MCF 10A (cell line): ENCODE measurements at regions of chr16 and their contacts with region 1.

Region 1: DNA sequence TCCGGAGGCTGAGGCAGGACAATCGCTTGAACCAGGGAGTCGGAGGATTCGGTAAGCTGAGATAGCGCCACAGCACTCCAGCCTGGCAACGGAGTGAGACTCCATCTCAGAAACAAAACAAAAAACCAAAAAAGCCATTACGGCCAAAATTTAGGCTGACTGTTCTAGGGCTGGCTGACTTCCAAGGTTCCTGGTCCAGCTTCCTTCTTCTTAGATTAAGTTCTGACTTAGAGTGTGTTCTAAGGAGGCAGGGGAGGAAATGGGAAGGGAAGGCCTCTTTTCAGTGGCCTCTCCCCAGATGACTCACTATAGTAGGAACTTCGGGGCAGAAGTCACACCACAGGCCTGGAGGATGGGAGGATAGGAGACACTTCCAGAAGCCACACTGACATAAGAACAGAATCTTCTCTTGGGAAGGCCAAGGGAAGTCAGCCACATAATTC is 27.7 kb upstream of the CLEC18B start:
- DNase-seq: peak; percentile 93
- H3K4me3 Mint-ChIP-seq: peak overlapping the region; percentile 31
- H3K27ac Mint-ChIP-seq: peak overlapping the region; percentile 86
- H3K4me1 Mint-ChIP-seq: peaks cover 15% of the 10 kb centered on the region
- H3K27me3 Mint-ChIP-seq: no peaks in the 10 kb centered on the region
- CTCF ChIP-seq: no peak

Region 2: DNA sequence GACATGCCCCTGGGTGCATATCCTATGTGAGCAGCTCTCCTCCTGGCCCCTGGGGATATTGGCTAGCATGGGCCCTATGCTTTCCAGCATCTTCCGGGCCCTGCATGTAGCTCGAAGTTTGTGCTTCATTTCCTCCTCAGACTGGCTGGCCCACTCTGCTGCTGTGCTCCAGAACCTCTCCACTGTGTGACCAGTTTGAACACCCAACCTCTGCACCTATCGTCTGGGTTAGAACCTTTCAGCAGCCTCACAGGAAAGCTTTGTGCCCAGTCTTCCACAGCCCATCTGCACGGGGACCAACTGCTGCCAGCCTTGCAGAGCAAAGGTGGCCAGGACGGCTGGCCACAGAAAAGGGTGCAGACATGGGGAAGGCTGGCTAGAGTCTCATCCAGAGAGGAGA is 17.5 kb before region 1 on chr16:
- CTCF ChIA-PET with region 1: interaction called, 6 read pairs
- POLR2A ChIA-PET with region 1: interaction called, 16 read pairs
- intact Hi-C with region 1: no loop called
- DNase-seq: no peak
- H3K4me3 Mint-ChIP-seq: no peak overlapping the region
- H3K27ac Mint-ChIP-seq: peak overlapping the region; percentile 59
- H3K4me1 Mint-ChIP-seq: peaks cover 7% of the 10 kb centered on the region
- H3K27me3 Mint-ChIP-seq: no peaks in the 10 kb centered on the region
- CTCF ChIP-seq: no peak

Region 3: DNA sequence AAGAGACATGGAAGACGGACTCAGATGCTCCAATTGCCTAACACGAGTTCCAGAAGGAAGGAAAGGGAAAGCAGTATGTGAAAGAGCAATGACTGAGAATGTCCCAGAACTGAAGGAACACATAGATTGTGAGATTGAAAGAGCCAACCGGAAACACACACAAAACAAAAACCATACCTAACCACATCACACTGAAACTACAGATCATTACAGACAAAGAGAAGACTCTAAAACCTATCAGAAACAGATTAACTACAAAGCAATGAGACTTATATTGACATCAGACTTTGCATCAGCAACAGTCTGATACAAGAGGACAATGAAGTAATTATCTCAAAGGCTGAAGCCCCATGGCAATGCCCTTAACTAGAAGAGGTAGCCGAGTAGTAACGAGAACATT is 17.9 kb after region 1 on chr16:
- CTCF ChIA-PET with region 1: interaction called, 20 read pairs
- POLR2A ChIA-PET with region 1: interaction called, 46 read pairs
- intact Hi-C with region 1: no loop called
- DNase-seq: no peak
- H3K4me3 Mint-ChIP-seq: no peak overlapping the region
- H3K27ac Mint-ChIP-seq: no peak overlapping the region
- H3K4me1 Mint-ChIP-seq: peaks cover 13% of the 10 kb centered on the region
- H3K27me3 Mint-ChIP-seq: no peaks in the 10 kb centered on the region
- CTCF ChIP-seq: no peak

Region 4: DNA sequence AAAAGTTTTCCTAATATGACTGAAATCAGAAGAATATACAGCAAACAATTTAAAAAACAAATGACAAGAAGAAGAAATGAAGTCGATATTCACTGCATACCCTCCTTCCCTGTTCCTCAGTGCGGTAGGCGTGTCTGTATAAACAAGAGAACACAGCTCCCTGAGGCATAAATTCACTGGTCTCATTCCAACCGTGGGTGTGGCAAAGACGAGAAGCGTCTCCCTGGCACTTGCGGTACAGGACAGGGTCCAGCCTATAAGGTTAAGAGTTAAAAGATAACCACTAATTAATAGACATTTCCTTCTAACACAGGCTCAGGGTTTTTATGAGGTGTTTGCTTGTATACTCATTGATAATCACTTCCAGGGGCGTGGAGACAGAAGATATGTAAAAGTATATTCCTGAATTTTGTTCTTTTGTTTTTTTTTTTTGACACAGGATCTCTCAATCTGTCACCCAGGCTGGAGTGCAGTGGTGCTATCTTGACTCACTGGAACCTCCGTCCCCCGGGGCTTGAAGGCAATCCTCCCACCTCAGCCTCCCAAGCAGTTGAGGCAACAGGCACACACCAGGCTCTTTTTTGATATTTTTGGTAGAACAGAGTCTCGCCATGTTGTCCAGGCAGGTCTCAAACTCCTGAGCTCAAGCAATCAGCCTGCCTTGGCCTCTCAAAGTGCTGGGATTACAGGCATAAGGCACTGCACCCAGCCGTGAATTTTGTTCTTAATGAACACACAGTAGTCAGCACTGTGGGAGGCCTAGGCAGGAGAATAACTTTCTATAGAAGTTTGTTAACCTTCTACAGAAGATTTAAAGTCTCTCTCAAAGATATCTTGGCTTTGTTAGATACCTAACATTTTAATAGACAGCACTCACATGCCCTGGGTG is 31.4 kb after region 1 on chr16:
- CTCF ChIA-PET with region 1: interaction called, 5 read pairs
- POLR2A ChIA-PET with region 1: interaction called, 21 read pairs
- intact Hi-C with region 1: no loop called
- DNase-seq: peak; percentile 91
- H3K4me3 Mint-ChIP-seq: peak overlapping the region; percentile 57
- H3K27ac Mint-ChIP-seq: peak overlapping the region; percentile 92
- H3K4me1 Mint-ChIP-seq: peaks cover 28% of the 10 kb centered on the region
- H3K27me3 Mint-ChIP-seq: no peaks in the 10 kb centered on the region
- CTCF ChIP-seq: no peak

Region 5: GRCh38 chr16:74623214-74623842 is 174.3 kb after region 1 on chr16:
- CTCF ChIA-PET with region 1: interaction called, 5 read pairs
- POLR2A ChIA-PET with region 1: no interaction called
- intact Hi-C with region 1: loop called (anchors 5 kb)
- DNase-seq: peak; percentile 60
- H3K4me3 Mint-ChIP-seq: no peak overlapping the region
- H3K27ac Mint-ChIP-seq: no peak overlapping the region
- H3K4me1 Mint-ChIP-seq: peaks cover 4% of the 10 kb centered on the region
- H3K27me3 Mint-ChIP-seq: no peaks in the 10 kb centered on the region
- CTCF ChIP-seq: peak; percentile 65

Region 6: DNA sequence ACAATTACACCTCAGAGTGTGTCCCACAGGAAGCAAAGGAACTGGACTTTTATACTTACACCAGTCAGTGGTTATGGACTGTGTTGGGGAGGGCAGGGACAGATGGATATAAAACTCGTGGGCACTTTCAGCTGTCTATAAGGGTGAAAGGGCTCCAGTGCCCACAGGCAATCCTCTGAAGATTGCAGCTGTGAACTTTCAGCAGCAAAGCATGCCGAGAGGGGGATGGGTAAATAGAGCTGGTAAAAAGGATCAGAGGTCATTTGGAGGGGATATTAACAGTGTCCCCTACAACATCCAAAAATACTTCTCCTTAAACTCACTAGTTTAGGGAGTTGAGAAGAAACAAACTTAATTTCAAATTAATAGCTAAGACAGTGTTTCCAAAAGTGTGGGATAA is 231.0 kb after region 1 on chr16:
- CTCF ChIA-PET with region 1: no interaction called
- POLR2A ChIA-PET with region 1: no interaction called
- intact Hi-C with region 1: no loop called
- DNase-seq: no peak
- H3K4me3 Mint-ChIP-seq: no peak overlapping the region
- H3K27ac Mint-ChIP-seq: no peak overlapping the region
- H3K4me1 Mint-ChIP-seq: no peaks in the 10 kb centered on the region
- H3K27me3 Mint-ChIP-seq: no peaks in the 10 kb centered on the region
- CTCF ChIP-seq: no peak